Activated CD4-positive, alpha-beta T cell treated with anti-CD3 and anti-CD28 coated beads for 36 hours (primary cell): ENCODE measurements at regions of chr2 and their contacts with region 1.

Region 1: GRCh38 chr2:74886811-74887210 is 52.9 kb downstream of the HK2 start:
- DNase-seq: no peak
- ATAC-seq: no peak
- H3K4me3 Mint-ChIP-seq: no peak overlapping the region
- H3K27ac Mint-ChIP-seq: no peak overlapping the region
- H3K4me1 Mint-ChIP-seq: no peaks in the 10 kb centered on the region
- H3K27me3 Mint-ChIP-seq: no peaks in the 10 kb centered on the region

Region 2: GRCh38 chr2:74876081-74876886 is 10.5 kb before region 1 on chr2:
- CTCF ChIA-PET with region 1: interaction called, 11 read pairs
- POLR2A ChIA-PET with region 1: no interaction called
- intact Hi-C with region 1: no loop called
- DNase-seq: peak; percentile 54
- ATAC-seq: peak; percentile 91
- H3K4me3 Mint-ChIP-seq: no peak overlapping the region
- H3K27ac Mint-ChIP-seq: peak overlapping the region; percentile 21
- H3K4me1 Mint-ChIP-seq: no peaks in the 10 kb centered on the region
- H3K27me3 Mint-ChIP-seq: no peaks in the 10 kb centered on the region

Region 3: DNA sequence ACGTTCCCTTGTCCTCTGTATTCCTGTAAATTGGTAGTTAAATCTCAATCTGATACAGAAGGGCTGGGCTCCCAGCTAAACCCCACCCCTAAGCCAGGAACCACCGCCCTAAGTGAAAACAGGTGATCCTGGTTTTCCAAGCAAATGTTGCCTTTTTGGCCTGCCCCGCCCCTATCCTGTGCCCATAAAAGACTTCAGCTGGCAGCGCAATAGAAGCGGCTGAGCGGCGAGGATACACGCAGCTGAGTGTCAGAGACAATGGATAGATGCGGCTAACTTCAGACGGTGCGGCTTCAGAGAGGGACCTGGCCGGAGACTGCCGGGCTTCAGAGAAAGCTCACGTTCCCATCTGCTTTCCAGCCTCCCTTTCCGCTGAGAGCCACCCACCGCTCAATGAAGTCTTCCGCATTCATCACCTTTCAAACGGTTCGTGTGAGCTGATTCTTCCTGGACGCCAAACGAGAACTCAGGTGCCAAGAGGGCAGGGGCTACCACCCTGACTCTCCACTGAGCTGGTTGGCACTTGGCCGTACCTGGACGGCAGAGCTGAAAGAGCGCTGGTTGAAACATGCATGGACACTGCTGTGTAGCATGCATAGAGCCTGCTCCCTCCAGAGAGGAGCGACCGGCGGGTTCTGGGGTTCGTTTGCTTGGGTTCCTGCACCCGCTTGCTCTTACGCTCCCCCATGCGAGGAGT is 22.1 kb after region 1 on chr2:
- CTCF ChIA-PET with region 1: no interaction called
- POLR2A ChIA-PET with region 1: no interaction called
- intact Hi-C with region 1: no loop called
- DNase-seq: no peak
- ATAC-seq: no peak
- H3K4me3 Mint-ChIP-seq: no peak overlapping the region
- H3K27ac Mint-ChIP-seq: no peak overlapping the region
- H3K4me1 Mint-ChIP-seq: peaks cover 6% of the 10 kb centered on the region
- H3K27me3 Mint-ChIP-seq: peaks cover 27% of the 10 kb centered on the region

Region 4: GRCh38 chr2:75403991-75404428 is 517.2 kb after region 1 on chr2:
- CTCF ChIA-PET with region 1: no interaction called
- POLR2A ChIA-PET with region 1: no interaction called
- intact Hi-C with region 1: no loop called
- DNase-seq: no peak
- ATAC-seq: peak; percentile 63
- H3K4me3 Mint-ChIP-seq: no peak overlapping the region
- H3K27ac Mint-ChIP-seq: no peak overlapping the region
- H3K4me1 Mint-ChIP-seq: no peaks in the 10 kb centered on the region
- H3K27me3 Mint-ChIP-seq: peaks cover 8% of the 10 kb centered on the region